GM12878 (cell line): ENCODE measurements at regions of chr7 and their contacts with region 1.

Region 1: DNA sequence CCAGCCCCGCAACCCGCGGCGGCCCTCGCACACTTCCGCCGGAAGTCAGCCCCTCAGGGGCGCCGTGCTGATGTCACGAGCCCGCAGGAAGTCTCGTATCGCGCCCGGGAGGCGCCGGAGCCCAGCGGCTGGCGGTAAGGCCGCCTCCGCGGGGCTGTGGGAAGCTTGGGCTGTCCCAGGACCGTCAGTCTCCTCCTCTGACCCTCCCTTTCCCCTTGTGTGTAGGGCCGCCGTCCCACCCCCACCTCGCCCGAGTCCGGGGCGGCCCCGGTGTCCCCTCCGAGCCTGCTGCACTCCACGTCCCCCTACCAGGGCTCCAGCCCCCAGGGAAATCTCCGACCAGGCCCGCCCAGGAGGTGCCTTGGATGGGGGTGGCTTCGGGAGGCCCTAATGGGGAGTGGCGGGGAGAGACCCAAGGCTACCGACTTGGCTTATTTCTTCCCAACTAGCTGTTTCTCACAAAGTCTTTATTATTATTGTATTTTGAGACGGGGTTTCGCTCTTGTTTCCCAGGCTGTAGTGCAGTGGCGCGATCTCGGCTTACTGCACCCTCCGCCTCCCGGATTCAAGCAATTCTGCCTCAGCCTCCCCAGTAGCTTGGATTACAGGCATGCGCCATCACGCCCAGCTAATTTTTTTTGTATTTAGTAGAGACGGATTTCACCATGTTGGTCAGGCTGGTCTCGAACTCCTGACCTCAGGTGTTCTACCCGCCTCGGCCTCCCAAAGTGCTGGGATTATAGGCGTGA is at the start of gene ZDHHC4:
- DNase-seq: peak; percentile 61
- ATAC-seq: peak; percentile 95
- H3K4me3 ChIP-seq: peak within 1 kb of the TSS; percentile 98
- H3K27ac ChIP-seq: peak within 1 kb of the TSS; percentile 75
- H3K4me1 ChIP-seq: peaks cover 29% of the 10 kb centered on the region
- H3K27me3 ChIP-seq: no peaks in the 10 kb centered on the region
- CTCF ChIP-seq: no peak
- EP300 ChIP-seq: no peak; a peak in 1 of 4 replicates
- POLR2A ChIP-seq: peak; percentile 96
- RAD21 ChIP-seq: no peak
- polyA plus RNA-seq, gene ZDHHC4: 34.5 to 37.9 TPM

Region 2: GRCh38 chr7:6092953-6093354 is 484.6 kb before region 1 on chr7:
- CTCF ChIA-PET with region 1: no interaction called
- POLR2A ChIA-PET with region 1: no interaction called
- RAD21 ChIA-PET with region 1: no interaction called
- SMC1A ChIA-PET with region 1: no interaction called
- in situ Hi-C with region 1: no loop called
- intact Hi-C with region 1: no loop called
- DNase-seq: no peak
- ATAC-seq: no peak
- H3K4me3 ChIP-seq: no peak overlapping the region
- H3K27ac ChIP-seq: no peak overlapping the region
- H3K4me1 ChIP-seq: no peaks in the 10 kb centered on the region
- H3K27me3 ChIP-seq: no peaks in the 10 kb centered on the region
- CTCF ChIP-seq: no peak
- EP300 ChIP-seq: no peak
- POLR2A ChIP-seq: no peak
- RAD21 ChIP-seq: no peak

Region 3: DNA sequence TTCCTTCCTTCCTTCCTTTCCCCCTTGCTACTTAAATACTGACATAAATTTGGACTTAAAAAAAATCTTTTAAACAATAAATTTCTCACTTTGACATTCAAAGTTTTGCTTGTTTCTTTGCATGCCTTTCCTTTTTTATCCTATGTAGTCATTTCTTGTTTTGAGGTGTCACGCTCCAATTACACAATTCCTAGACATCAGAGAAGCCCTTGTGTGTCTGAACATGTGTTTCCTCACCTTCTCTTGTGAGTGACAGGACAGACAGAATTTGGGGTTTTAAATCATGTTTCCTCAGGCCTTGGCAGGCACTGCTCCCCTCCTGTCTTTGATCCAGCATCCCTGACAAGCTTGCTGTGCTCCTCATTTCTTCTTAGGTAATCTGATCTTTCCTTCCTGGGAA is 396.4 kb before region 1 on chr7:
- CTCF ChIA-PET with region 1: no interaction called
- POLR2A ChIA-PET with region 1: no interaction called
- RAD21 ChIA-PET with region 1: no interaction called
- SMC1A ChIA-PET with region 1: no interaction called
- in situ Hi-C with region 1: no loop called
- intact Hi-C with region 1: no loop called
- DNase-seq: no peak
- ATAC-seq: no peak
- H3K4me3 ChIP-seq: no peak overlapping the region
- H3K27ac ChIP-seq: no peak overlapping the region
- H3K4me1 ChIP-seq: peaks cover 5% of the 10 kb centered on the region
- H3K27me3 ChIP-seq: no peaks in the 10 kb centered on the region
- CTCF ChIP-seq: no peak
- EP300 ChIP-seq: no peak
- POLR2A ChIP-seq: no peak
- RAD21 ChIP-seq: no peak

Region 4: DNA sequence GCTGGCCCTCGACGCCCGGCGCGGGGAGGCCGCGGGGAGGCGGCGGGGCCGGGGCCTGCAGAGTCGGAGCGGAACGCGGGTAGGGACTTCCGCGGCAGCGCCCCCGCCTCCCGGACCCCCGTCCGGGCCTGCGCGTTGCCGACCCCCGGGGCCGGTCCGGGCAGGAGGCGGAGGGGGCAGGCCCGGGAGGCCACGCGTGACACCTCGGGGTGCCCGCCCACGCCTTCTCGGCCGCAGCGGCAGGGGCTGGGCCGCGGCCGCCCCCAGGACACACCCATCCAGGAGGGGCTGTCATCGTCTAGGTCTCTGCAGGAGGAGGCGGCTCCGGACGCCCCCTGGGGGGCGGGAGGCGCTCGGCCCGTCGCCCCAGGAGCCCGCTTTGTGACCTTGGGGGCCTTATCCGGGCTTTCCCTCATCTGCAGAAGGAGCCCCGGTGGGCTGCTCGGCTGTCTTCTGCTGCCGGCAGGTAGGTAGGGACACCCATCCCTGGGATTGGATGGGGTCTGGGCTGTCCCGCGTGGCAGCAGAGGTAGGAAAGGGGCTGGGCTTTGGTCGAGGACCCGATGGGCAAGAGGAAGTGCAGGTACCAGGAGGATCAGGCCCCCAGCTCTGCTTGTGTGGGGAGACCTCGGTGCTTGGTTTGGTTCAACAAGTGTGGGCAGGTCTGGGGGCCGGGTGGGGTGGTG is 60.1 kb after region 1 on chr7:
- CTCF ChIA-PET with region 1: no interaction called
- POLR2A ChIA-PET with region 1: interaction called, 3 read pairs
- RAD21 ChIA-PET with region 1: no interaction called
- SMC1A ChIA-PET with region 1: no interaction called
- in situ Hi-C with region 1: no loop called
- intact Hi-C with region 1: loop called (anchors 5 kb)
- DNase-seq: no peak
- ATAC-seq: peak; percentile 89
- H3K4me3 ChIP-seq: peak overlapping the region; percentile 73
- H3K27ac ChIP-seq: peak overlapping the region; percentile 58; the same call in 1 of the 2 replicates
- H3K4me1 ChIP-seq: peaks cover 9% of the 10 kb centered on the region; the same call in 1 of the 2 replicates
- H3K27me3 ChIP-seq: no peaks in the 10 kb centered on the region
- CTCF ChIP-seq: peak; percentile 39 to 64 (median 53)
- EP300 ChIP-seq: no peak
- POLR2A ChIP-seq: no peak; the same call in 1 of the 2 replicates
- RAD21 ChIP-seq: peak; percentile 36